ENCODE measurements at regions of chr7 and their contacts with region 1.

Region 1: DNA sequence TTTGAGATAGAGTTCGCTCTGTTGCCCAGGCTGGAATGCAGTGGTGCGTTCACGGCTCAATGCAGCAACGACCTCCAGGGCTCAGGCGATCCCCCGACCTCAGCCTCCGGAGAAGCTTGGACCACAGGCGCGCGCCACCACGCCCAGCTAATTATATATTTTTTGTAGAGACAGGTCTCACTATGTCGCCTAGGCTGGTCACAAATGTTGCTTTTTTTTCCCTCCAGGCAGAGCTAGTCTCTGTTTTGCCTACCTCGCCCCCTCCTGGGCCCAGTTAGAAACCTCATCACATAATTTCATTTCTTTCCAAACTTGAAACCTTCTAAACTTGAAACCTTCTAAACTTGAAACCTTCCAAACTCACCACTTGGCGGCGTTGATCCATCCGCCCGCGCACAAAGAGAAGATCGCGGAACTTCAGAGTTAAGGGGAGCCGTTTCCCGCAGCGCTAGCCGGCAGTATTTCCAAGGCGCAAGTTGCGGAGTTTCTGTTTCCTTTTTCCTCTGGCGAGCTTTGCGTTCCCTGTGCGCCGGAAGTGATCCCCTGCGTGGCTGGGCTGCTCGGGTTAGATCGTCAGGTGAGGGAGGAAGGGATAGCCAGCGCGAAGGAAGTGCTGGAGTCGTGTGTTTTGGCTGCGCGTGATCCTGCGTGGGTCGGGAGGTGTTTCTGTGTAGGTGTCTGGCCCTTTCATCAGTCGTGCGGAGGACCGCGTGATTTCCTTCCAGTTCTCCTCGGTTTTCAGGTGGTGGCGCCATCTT is at the start of gene SSBP1:
- DNase-seq: peak; percentile 91
- H3K4me3 Mint-ChIP-seq: peak within 1 kb of the TSS; percentile 94
- H3K27ac Mint-ChIP-seq: peak within 1 kb of the TSS; percentile 96
- H3K4me1 Mint-ChIP-seq: peaks cover 24% of the 10 kb centered on the region
- H3K27me3 Mint-ChIP-seq: no peaks in the 10 kb centered on the region
- total RNA-seq, gene SSBP1: 240 and 245 TPM in 2 replicates

Region 2: GRCh38 chr7:140673063-140673773 is 1064.8 kb before region 1 on chr7:
- intact Hi-C with region 1: loop called (anchors 2 kb)
- DNase-seq: peak; percentile 56
- H3K4me3 Mint-ChIP-seq: peak overlapping the region; percentile 88
- H3K27ac Mint-ChIP-seq: peak overlapping the region; percentile 89
- H3K4me1 Mint-ChIP-seq: peaks cover 27% of the 10 kb centered on the region
- H3K27me3 Mint-ChIP-seq: peaks cover 2% of the 10 kb centered on the region

Region 3: GRCh38 chr7:141072548-141073172 is 665.4 kb before region 1 on chr7:
- intact Hi-C with region 1: loop called (anchors 1 kb)
- DNase-seq: peak; percentile 40
- H3K4me3 Mint-ChIP-seq: peak overlapping the region; percentile 79
- H3K27ac Mint-ChIP-seq: no peak overlapping the region
- H3K4me1 Mint-ChIP-seq: peaks cover 36% of the 10 kb centered on the region
- H3K27me3 Mint-ChIP-seq: peaks cover 39% of the 10 kb centered on the region

Region 4: GRCh38 chr7:141533149-141533949 is 204.7 kb before region 1 on chr7:
- intact Hi-C with region 1: no loop called
- DNase-seq: peak; percentile 34
- H3K4me3 Mint-ChIP-seq: no peak overlapping the region
- H3K27ac Mint-ChIP-seq: no peak overlapping the region
- H3K4me1 Mint-ChIP-seq: peaks cover 7% of the 10 kb centered on the region
- H3K27me3 Mint-ChIP-seq: peaks cover 20% of the 10 kb centered on the region

Region 5: GRCh38 chr7:141558544-141559183 is 179.3 kb before region 1 on chr7:
- intact Hi-C with region 1: loop called (anchors 1 kb)
- DNase-seq: peak; percentile 31
- H3K4me3 Mint-ChIP-seq: peak overlapping the region; percentile 60
- H3K27ac Mint-ChIP-seq: peak overlapping the region; percentile 94
- H3K4me1 Mint-ChIP-seq: peaks cover 83% of the 10 kb centered on the region
- H3K27me3 Mint-ChIP-seq: no peaks in the 10 kb centered on the region

Region 6: DNA sequence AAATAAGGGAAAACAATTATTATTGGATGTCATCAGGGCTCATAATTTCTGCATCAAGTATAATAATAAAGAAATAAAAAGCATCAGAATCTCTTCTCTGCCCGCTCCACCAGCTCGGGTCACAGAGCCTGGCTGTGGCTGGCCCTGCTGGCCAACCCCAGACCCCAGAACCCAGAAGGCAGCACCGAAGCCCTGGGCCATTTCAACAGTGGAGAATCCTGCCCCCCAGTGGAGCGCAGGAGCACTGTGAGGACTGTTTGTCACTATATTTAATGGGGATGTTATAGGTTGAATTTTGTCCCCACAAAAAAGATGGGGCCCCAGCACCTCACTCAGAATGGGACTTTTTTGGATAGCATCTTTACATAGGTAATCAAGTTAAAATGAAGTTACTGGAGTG is 63.3 kb before region 1 on chr7:
- intact Hi-C with region 1: loop called (anchors 1 kb)
- DNase-seq: no peak
- H3K4me3 Mint-ChIP-seq: no peak overlapping the region
- H3K27ac Mint-ChIP-seq: peak overlapping the region; percentile 75
- H3K4me1 Mint-ChIP-seq: peaks cover 45% of the 10 kb centered on the region
- H3K27me3 Mint-ChIP-seq: no peaks in the 10 kb centered on the region

Region 7: GRCh38 chr7:143287935-143288826 is 1550.2 kb after region 1 on chr7 and contains the start of gene CASP2:
- intact Hi-C with region 1: loop called (anchors 10 kb)
- DNase-seq: peak; percentile 98
- H3K4me3 Mint-ChIP-seq: peak within 1 kb of the TSS; percentile 94
- H3K27ac Mint-ChIP-seq: peak within 1 kb of the TSS; percentile 92
- H3K4me1 Mint-ChIP-seq: peaks cover 63% of the 10 kb centered on the region
- H3K27me3 Mint-ChIP-seq: no peaks in the 10 kb centered on the region
- total RNA-seq, gene CASP2: 107 and 110 TPM in 2 replicates

Measured in activated T-helper 1 cell treated with anti-CD3 and anti-CD28 coated beads, Interleukin-12 subunit alpha, Interleukin-12 subunit beta, Interleukin-2, Interleukin-4 antibody, amounts not matched to agents 30 ng/mL and 10 ng/mL and 1 ng/mL, durations not matched to agents 14 hours and 24 hours and 36 hours (primary cell).